OCI-LY7 (cell line): ENCODE measurements at regions of chr6 and their contacts with region 1.

Region 1: DNA sequence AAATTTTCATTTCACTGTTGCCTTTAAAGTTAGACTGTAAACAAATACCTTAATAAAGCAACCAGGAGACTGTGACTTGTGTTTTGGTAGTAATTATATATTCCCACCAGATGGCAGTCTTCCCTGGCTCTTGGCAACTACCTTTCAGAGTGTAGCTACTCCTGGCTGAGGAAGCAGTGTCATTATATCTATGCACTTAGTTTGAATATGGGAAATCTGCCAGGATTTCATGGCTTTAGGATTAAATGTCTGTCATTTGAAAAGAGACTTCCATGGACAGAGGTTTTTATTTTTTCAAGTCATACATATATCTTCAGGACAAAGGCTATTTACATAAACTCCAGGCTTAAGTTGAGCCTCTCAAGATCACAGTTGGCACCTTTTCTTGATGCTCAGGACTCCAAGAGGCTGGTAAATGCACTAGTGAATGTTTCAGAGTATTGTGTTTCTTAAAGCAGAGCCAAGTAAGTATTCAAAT is 160.1 kb downstream of the C6orf58 start:
- DNase-seq: peak; percentile 53
- H3K4me3 ChIP-seq: no peak overlapping the region
- H3K27ac ChIP-seq: no peak overlapping the region
- H3K4me1 ChIP-seq: peaks cover 4% of the 10 kb centered on the region
- CTCF ChIP-seq: peak; percentile 85

Region 2: DNA sequence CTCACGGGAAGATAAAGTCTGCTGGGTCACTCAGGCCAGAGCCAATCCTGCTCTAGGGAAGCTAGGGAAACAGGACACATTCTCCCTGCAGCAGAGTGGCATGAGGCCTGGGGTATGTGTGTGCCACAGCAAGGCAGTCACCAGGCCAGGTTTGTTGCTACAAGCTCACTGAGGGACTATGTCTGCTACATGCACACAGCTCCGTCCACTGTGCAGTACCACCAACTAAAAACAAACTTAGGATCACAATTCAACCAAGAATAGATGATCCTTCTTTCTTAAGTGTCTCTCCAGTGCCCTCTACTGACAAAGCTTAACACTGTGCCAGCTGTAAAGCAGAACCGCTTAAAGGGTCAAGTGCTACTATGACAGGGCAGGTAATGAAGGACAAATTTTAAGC is 590.8 kb after region 1 on chr6:
- CTCF ChIA-PET with region 1: no interaction called
- POLR2A ChIA-PET with region 1: no interaction called
- intact Hi-C with region 1: loop called (anchors 5 kb)
- DNase-seq: peak; percentile 41
- H3K4me3 ChIP-seq: no peak overlapping the region
- H3K27ac ChIP-seq: no peak overlapping the region
- H3K4me1 ChIP-seq: no peaks in the 10 kb centered on the region
- CTCF ChIP-seq: peak; percentile 81

Region 3: GRCh38 chr6:128731249-128732165 is 994.5 kb after region 1 on chr6:
- CTCF ChIA-PET with region 1: no interaction called
- POLR2A ChIA-PET with region 1: no interaction called
- intact Hi-C with region 1: loop called (anchors 5 kb)
- DNase-seq: no peak
- H3K4me3 ChIP-seq: no peak overlapping the region
- H3K27ac ChIP-seq: no peak overlapping the region
- H3K4me1 ChIP-seq: no peaks in the 10 kb centered on the region
- CTCF ChIP-seq: peak; percentile 60